ENCODE measurements at regions of chrX and their contacts with region 1.

Region 1: GRCh38 chrX:108511721-108512120 is 72.1 kb downstream of the COL4A5 start:
- DNase-seq: no peak
- H3K4me3 Mint-ChIP-seq: no peak overlapping the region
- H3K27ac Mint-ChIP-seq: no peak overlapping the region
- H3K4me1 Mint-ChIP-seq: no peaks in the 10 kb centered on the region
- H3K27me3 Mint-ChIP-seq: no peaks in the 10 kb centered on the region
- CTCF ChIP-seq: no peak

Region 2: DNA sequence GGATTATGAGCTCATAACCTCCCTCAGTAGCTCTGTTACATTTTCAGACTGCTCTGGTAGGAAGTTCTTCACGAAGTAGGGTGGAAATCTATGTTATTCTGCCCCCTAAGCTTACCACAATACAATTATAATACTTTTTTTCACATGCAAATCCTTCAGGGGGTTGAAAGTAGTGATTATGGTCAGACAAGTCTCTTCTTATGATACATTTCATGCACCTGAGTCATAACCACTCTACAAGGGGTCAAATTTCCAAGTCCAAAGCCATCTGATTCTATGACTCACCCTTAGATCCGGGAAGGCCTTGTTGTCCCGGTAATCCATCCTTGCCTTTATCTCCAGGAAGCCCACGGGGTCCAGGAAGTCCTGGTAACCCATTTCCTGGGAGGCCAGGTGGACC is 324.9 kb before region 1 on chrX:
- CTCF ChIA-PET with region 1: no interaction called
- intact Hi-C with region 1: no loop called
- DNase-seq: peak; percentile 14
- H3K4me3 Mint-ChIP-seq: no peak overlapping the region
- H3K27ac Mint-ChIP-seq: peak overlapping the region; percentile 47
- H3K4me1 Mint-ChIP-seq: peaks cover 21% of the 10 kb centered on the region
- H3K27me3 Mint-ChIP-seq: no peaks in the 10 kb centered on the region
- CTCF ChIP-seq: no peak

Region 3: GRCh38 chrX:108344216-108344615 is 167.5 kb before region 1 on chrX:
- CTCF ChIA-PET with region 1: interaction called, 10 read pairs
- intact Hi-C with region 1: no loop called
- DNase-seq: no peak
- H3K4me3 Mint-ChIP-seq: no peak overlapping the region
- H3K27ac Mint-ChIP-seq: no peak overlapping the region
- H3K4me1 Mint-ChIP-seq: no peaks in the 10 kb centered on the region
- H3K27me3 Mint-ChIP-seq: no peaks in the 10 kb centered on the region
- CTCF ChIP-seq: no peak

Region 4: DNA sequence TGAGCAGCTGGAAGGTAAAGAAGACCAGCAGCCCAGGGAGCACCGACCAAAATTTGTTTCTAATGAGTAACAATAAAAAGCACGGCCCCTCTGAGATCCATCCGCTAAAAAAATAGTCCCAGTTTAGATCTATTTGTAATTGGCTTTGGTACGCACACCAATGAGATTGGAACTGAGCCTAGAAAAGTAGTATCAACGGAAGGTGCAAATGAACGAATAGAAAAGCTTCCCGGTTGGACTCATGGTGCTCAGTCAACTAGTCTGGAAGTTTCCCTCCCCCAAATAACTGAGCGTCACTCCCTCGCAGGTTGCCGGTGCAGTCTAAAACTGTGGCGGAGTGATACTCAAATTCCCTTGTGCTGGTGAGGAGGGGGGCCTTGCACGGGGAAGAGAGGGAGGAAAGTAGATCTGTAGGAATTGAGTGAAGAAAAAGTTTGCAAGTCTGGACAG is 72.3 kb before region 1 on chrX and contains the start of gene COL4A5:
- CTCF ChIA-PET with region 1: no interaction called
- intact Hi-C with region 1: no loop called
- DNase-seq: peak; percentile 65
- H3K4me3 Mint-ChIP-seq: peak within 1 kb of the TSS; percentile 88
- H3K27ac Mint-ChIP-seq: peak within 1 kb of the TSS; percentile 86
- H3K4me1 Mint-ChIP-seq: peaks cover 8% of the 10 kb centered on the region
- H3K27me3 Mint-ChIP-seq: no peaks in the 10 kb centered on the region
- CTCF ChIP-seq: no peak
- total RNA-seq, gene COL4A5: 19.8 and 23.1 TPM in 2 replicates

Measured in Calu3 (cell line).